ENCODE measurements at regions of chr15 and their contacts with region 1.

Region 1: GRCh38 chr15:65184868-65185738 is at the start of gene CLPX:
- DNase-seq: peak; percentile 92
- H3K4me3 ChIP-seq: peak within 1 kb of the TSS; percentile 94
- H3K27ac ChIP-seq: peak within 1 kb of the TSS; percentile 65
- H3K4me1 ChIP-seq: peaks cover 27% of the 10 kb centered on the region
- CTCF ChIP-seq: no peak
- total RNA-seq, gene CLPX: 26.0 and 34.0 TPM in 2 replicates

Region 2: DNA sequence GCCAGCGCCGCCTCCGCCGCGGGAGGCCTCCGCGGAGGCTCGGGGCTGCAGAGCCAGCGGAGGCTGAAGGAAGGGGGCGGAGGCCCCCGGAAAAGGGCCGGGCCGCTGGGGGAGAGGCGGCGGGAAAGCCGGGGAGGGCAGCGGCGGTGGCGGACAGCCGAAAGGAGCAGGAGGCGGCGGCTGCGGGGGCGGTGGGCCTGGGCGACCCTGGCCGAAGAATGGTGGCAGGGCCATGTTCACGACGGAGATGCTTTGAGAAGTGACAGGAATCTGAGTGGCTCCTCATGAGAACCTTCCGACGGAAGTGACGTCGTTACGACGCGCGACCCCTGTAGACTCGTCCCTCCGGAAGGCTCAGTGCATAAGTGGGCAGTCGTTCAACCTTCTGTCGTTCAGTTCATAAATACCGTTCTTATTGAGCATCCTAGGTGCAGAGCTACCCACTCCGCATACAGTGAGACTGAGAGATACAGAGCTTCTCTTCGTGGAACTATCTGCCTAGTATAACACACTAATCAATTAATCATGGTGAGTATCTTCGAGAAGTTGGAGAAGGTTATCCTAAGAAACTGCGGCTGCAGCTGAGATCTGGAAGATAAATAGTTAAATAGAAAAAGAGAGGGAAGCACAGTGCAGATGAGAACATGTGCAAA is 51.4 kb before region 1 on chr15 and contains the start of gene PDCD7:
- CTCF ChIA-PET with region 1: no interaction called
- POLR2A ChIA-PET with region 1: interaction called, 3 read pairs
- intact Hi-C with region 1: loop called (anchors 1 kb)
- DNase-seq: peak; percentile 95
- H3K4me3 ChIP-seq: peak within 1 kb of the TSS; percentile 87
- H3K27ac ChIP-seq: peak within 1 kb of the TSS; percentile 64
- H3K4me1 ChIP-seq: peaks cover 13% of the 10 kb centered on the region
- CTCF ChIP-seq: no peak
- total RNA-seq, gene PDCD7: 27.2 and 34.6 TPM in 2 replicates

Region 3: GRCh38 chr15:65384895-65385858 is 200.1 kb after region 1 on chr15:
- CTCF ChIA-PET with region 1: no interaction called
- POLR2A ChIA-PET with region 1: no interaction called
- intact Hi-C with region 1: loop called (anchors 1 kb)
- DNase-seq: peak; percentile 85
- H3K4me3 ChIP-seq: peak overlapping the region; percentile 54
- H3K27ac ChIP-seq: no peak overlapping the region
- H3K4me1 ChIP-seq: peaks cover 8% of the 10 kb centered on the region
- CTCF ChIP-seq: peak; percentile 90

Measured in OCI-LY7 (cell line).